MCF 10A (cell line): ENCODE measurements at regions of chr16 and their contacts with region 1.

Region 1: DNA sequence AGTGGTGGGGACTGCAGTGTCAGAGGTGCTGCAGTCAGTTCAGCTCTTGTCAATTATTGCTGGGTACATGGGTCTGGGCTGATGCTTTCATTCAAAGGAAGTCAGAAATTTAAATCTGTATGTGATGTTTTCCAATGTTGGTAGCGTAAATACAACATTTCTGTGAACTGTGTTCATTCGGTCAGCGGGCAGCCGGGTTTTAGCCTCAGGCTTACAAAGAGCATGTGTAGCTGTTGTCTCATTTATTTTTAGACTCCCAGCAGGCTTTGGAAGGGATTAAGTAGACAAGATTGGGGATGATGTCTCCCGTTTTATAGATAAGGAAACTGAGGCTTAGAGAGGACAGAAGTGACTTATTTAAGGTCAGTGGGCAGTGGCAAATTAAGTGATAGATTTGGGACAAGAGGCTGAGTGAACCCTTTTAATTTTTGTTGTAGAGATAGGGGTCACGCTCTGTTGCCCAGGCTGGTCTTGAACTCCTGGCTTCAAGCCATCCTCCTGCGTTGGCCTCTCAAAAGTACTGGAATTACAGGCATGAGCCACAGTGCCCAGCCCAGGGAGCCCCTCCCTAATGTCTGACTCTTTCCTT is 8.1 kb downstream of the AQP8 start:
- DNase-seq: no peak
- H3K4me3 Mint-ChIP-seq: no peak overlapping the region
- H3K27ac Mint-ChIP-seq: no peak overlapping the region
- H3K4me1 Mint-ChIP-seq: peaks cover 7% of the 10 kb centered on the region
- H3K27me3 Mint-ChIP-seq: no peaks in the 10 kb centered on the region
- CTCF ChIP-seq: no peak

Region 2: DNA sequence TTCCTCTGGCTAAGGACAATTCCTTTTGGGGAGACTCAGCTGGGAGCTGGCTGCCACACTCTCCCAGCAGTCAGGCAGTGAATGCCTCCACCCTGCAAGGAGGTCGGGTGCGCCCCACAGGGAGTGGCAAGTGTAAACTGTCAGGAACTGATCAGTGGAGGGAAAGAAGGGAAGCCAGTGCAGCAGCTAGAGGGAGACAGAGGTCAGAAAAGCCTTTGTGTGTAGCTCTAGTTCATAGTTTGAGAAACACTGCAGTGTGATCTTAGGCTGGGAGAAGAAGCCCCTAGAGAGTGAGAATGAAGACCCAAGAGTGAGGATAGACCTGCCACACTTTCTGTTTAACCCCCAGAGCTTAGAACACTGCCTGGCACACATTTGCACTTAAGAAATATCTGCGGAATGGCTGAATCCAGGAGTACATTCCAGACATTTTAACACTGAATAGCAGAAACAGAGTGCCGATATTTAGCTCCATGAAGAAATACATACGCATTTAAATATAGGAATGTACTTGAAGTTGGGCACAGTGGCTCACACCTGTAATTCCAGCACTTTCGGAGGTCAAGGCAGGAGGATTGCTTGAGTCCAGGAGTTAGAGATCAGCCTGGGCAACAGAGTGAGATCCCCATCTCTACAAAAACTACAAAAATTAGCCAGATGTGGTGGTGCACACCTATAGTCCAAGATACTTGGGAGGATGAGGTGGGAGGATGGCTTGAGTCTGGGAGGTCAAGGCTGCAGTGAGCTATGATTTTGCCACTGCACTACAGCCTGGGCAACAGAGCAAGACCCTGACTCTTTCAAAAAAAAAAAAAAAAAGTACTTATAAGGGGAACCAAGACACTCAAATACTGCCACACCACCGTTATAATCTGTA is 390.1 kb before region 1 on chr16:
- CTCF ChIA-PET with region 1: interaction called, 22 read pairs
- POLR2A ChIA-PET with region 1: interaction called, 3 read pairs
- intact Hi-C with region 1: loop called (anchors 5 kb)
- DNase-seq: peak; percentile 66
- H3K4me3 Mint-ChIP-seq: no peak overlapping the region
- H3K27ac Mint-ChIP-seq: no peak overlapping the region
- H3K4me1 Mint-ChIP-seq: peaks cover 10% of the 10 kb centered on the region
- H3K27me3 Mint-ChIP-seq: no peaks in the 10 kb centered on the region
- CTCF ChIP-seq: peak; percentile 52

Region 3: GRCh38 chr16:25014500-25015147 is 210.2 kb before region 1 on chr16:
- CTCF ChIA-PET with region 1: interaction called, 10 read pairs
- POLR2A ChIA-PET with region 1: no interaction called
- intact Hi-C with region 1: no loop called
- DNase-seq: peak; percentile 49
- H3K4me3 Mint-ChIP-seq: peak overlapping the region; percentile 95
- H3K27ac Mint-ChIP-seq: peak overlapping the region; percentile 97
- H3K4me1 Mint-ChIP-seq: peaks cover 22% of the 10 kb centered on the region
- H3K27me3 Mint-ChIP-seq: no peaks in the 10 kb centered on the region
- CTCF ChIP-seq: no peak

Region 4: DNA sequence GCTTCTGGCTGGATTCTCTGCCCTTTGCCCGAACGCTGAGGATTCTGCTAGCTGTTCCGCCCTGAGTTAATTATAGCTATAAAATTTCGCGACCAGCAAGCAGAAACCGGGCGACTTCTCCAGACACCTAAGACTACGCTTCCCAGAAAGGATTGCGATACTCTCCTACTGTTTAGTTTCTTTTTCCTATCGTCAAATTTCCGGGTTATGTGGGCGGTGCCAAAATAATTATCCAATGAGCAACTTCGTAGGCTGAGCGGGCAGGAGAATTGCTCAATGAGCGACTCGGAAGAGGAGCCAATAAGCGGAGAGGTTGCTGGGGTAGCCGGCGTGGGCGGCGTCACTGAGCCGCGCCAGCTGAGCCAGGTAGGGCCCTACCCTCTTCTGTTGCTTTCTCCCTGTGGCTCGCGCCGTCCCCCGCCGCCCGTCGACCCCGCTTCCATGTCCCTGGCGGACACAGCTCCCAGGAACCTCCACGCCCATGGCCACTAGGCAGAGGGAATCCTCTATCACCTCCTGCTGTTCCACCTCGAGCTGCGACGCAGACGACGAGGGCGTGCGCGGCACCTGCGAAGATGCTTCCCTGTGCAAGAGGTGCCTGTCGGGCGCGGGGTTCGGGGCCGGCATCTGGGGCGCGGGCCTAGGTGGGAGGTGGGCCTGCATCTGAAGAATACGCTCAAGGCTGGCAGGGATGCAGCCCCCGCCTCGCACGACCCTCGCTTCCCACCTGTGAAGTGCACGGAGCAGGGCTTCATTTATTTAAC is 113.2 kb before region 1 on chr16 and contains the start of gene LCMT1:
- CTCF ChIA-PET with region 1: interaction called, 11 read pairs
- POLR2A ChIA-PET with region 1: interaction called, 3 read pairs
- intact Hi-C with region 1: no loop called
- DNase-seq: peak; percentile 98
- H3K4me3 Mint-ChIP-seq: peak within 1 kb of the TSS; percentile 93
- H3K27ac Mint-ChIP-seq: peak within 1 kb of the TSS; percentile 92
- H3K4me1 Mint-ChIP-seq: peaks cover 41% of the 10 kb centered on the region
- H3K27me3 Mint-ChIP-seq: no peaks in the 10 kb centered on the region
- CTCF ChIP-seq: no peak
- total RNA-seq, gene LCMT1: 28.1 and 36.3 TPM in 2 replicates

Region 5: GRCh38 chr16:25210758-25211157 is 14.1 kb before region 1 on chr16:
- CTCF ChIA-PET with region 1: interaction called, 30 read pairs
- POLR2A ChIA-PET with region 1: no interaction called
- intact Hi-C with region 1: no loop called
- DNase-seq: no peak
- H3K4me3 Mint-ChIP-seq: no peak overlapping the region
- H3K27ac Mint-ChIP-seq: no peak overlapping the region
- H3K4me1 Mint-ChIP-seq: no peaks in the 10 kb centered on the region
- H3K27me3 Mint-ChIP-seq: peaks cover 11% of the 10 kb centered on the region
- CTCF ChIP-seq: no peak

Region 6: DNA sequence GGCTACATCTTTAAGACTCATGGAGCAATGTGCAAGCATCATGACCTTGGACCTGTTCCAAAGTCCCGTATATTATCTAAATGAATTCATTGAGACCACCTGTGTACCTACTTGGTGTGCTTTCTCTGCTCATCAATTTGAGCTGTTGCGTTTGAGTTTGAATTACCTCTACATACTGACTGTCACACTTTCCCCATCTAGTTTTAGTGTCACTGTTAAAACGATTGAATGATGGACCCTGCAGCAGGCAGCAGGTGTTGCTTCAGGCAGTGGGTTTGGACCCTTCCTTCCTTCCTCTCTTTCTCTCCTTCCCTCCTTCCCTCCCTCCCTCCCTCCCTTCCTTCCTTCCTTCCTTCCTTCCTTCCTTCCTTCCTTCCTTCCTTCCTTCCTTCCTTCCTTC is 66.8 kb after region 1 on chr16:
- CTCF ChIA-PET with region 1: no interaction called
- POLR2A ChIA-PET with region 1: no interaction called
- intact Hi-C with region 1: no loop called
- DNase-seq: no peak
- H3K4me3 Mint-ChIP-seq: no peak overlapping the region
- H3K27ac Mint-ChIP-seq: no peak overlapping the region
- H3K4me1 Mint-ChIP-seq: no peaks in the 10 kb centered on the region
- H3K27me3 Mint-ChIP-seq: no peaks in the 10 kb centered on the region
- CTCF ChIP-seq: no peak

Region 7: GRCh38 chr16:25317732-25318316 is 93.0 kb after region 1 on chr16:
- CTCF ChIA-PET with region 1: no interaction called
- POLR2A ChIA-PET with region 1: no interaction called
- intact Hi-C with region 1: no loop called
- DNase-seq: no peak
- H3K4me3 Mint-ChIP-seq: no peak overlapping the region
- H3K27ac Mint-ChIP-seq: no peak overlapping the region
- H3K4me1 Mint-ChIP-seq: no peaks in the 10 kb centered on the region
- H3K27me3 Mint-ChIP-seq: no peaks in the 10 kb centered on the region
- CTCF ChIP-seq: no peak

Region 8: DNA sequence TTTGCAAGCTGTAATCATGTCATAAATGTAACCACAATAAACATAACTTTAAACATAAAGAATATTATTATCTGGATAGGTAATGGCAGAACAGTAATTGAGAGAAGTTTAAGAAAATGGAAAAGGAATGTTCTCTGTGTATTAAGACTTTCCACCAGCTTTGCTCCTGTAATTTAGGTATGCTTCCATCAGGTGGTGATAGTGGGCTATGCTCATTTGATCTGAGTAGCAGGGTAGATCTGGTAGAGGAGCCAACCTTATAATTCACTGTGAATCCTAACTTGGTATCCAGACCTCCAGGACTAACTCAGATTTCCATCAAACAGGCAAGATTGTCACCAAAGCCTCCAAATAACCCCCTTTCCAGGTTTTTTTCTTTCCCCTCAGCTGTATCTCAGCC is 170.7 kb after region 1 on chr16:
- CTCF ChIA-PET with region 1: no interaction called
- POLR2A ChIA-PET with region 1: no interaction called
- intact Hi-C with region 1: no loop called
- DNase-seq: no peak
- H3K4me3 Mint-ChIP-seq: no peak overlapping the region
- H3K27ac Mint-ChIP-seq: no peak overlapping the region
- H3K4me1 Mint-ChIP-seq: no peaks in the 10 kb centered on the region
- H3K27me3 Mint-ChIP-seq: no peaks in the 10 kb centered on the region
- CTCF ChIP-seq: no peak